Activated naive CD4-positive, alpha-beta T cell treated with anti-CD3 and anti-CD28 coated beads for 36 hours (primary cell): ENCODE measurements at regions of chrX and their contacts with region 1.

Region 1: GRCh38 chrX:46758906-46759644 is at the start of gene SLC9A7:
- DNase-seq: peak; percentile 82
- H3K4me3 Mint-ChIP-seq: peak within 1 kb of the TSS; percentile 91
- H3K27ac Mint-ChIP-seq: peak within 1 kb of the TSS; percentile 82
- H3K4me1 Mint-ChIP-seq: peaks cover 24% of the 10 kb centered on the region
- H3K27me3 Mint-ChIP-seq: peaks cover 4% of the 10 kb centered on the region
- total RNA-seq, gene SLC9A7: 10.1 to 11.1 TPM

Region 2: GRCh38 chrX:46796574-46797191 is 37.6 kb after region 1 on chrX:
- CTCF ChIA-PET with region 1: interaction called, 29 read pairs
- intact Hi-C with region 1: loop called (anchors 1 kb)
- DNase-seq: peak; percentile 86
- H3K4me3 Mint-ChIP-seq: no peak overlapping the region
- H3K27ac Mint-ChIP-seq: no peak overlapping the region
- H3K4me1 Mint-ChIP-seq: peaks cover 18% of the 10 kb centered on the region
- H3K27me3 Mint-ChIP-seq: no peaks in the 10 kb centered on the region

Region 3: DNA sequence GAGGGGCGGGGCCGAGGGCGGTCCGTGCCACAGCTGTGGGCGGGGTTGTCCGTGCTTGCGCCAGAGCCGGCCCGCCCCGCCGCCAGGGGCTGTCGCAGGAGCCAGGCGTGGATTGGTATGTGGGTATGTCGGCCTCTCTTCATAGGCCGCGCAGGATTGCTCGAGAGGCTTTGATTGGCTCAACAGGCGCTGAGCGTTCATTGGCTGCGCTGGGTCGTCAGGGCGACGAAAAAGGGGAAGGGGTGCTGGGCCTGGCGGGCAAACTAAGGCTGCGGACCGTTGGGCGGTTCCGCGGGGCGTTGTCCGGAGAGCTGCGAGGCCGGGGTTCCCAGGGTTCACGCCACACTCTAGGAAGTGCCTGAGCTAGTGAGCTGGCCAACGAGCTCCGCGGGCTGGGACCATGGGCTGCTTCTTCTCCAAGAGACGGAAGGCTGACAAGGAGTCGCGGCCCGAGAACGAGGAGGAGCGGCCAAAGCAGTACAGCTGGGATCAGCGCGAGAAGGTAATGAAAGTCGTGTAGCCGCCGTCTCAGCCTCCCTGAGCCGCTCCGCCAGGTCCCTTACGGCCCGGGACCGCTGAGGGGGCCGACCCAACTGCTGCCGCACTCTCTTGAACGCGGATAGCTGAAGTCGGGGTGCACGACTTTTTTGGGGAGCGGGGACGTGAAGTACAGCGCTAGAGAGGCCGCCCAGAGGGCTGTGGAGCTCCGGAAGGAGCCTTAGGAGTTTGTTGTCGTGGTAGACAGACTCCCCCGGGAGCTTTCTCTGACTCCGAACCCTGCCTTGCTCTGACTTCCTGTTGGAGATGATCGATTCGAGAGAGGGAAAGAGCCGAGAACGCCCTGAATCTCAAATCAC is 77.9 kb after region 1 on chrX and contains the start of gene RP2:
- CTCF ChIA-PET with region 1: no interaction called
- intact Hi-C with region 1: loop called (anchors 2 kb)
- DNase-seq: peak; percentile 89
- H3K4me3 Mint-ChIP-seq: peak within 1 kb of the TSS; percentile 91
- H3K27ac Mint-ChIP-seq: peak within 1 kb of the TSS; percentile 84
- H3K4me1 Mint-ChIP-seq: peaks cover 2% of the 10 kb centered on the region
- H3K27me3 Mint-ChIP-seq: no peaks in the 10 kb centered on the region
- total RNA-seq, gene RP2: 4.0 to 4.2 TPM

Region 4: DNA sequence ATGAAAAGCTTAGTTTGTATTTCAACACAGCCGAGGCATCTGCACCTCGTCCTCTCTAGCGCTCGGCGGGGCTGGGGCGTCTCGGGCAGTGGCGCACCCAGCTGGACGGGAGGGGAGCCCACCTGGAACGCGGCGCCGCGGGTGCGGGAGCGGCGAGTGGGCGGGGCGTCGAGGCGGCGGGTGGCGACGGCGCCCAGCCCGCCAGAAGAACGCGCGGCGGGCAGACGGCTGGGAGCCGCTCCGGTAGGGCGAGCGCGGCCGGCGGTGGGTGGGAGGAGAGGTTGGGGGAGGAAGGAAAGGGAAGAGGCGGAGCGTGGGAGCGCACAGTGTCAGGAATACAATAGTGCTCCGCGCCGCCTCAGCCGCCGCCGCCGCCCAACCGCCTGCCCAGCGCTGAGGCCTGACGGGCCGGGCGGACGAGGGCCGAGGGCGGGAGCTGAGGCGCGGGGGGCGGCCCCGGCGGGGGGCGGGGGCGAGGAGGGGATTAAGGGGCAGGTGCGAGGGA is 153.1 kb after region 1 on chrX and contains the start of gene JADE3:
- CTCF ChIA-PET with region 1: no interaction called
- intact Hi-C with region 1: loop called (anchors 5 kb)
- DNase-seq: peak; percentile 23
- H3K4me3 Mint-ChIP-seq: peak within 1 kb of the TSS; percentile 73
- H3K27ac Mint-ChIP-seq: no peak within 1 kb of the TSS
- H3K4me1 Mint-ChIP-seq: peaks cover 12% of the 10 kb centered on the region
- H3K27me3 Mint-ChIP-seq: peaks cover 32% of the 10 kb centered on the region
- total RNA-seq, gene JADE3: 1.4 TPM

Region 5: GRCh38 chrX:46978341-46979291 is 219.5 kb after region 1 on chrX:
- CTCF ChIA-PET with region 1: no interaction called
- intact Hi-C with region 1: loop called (anchors 2 kb)
- DNase-seq: peak; percentile 87
- H3K4me3 Mint-ChIP-seq: no peak overlapping the region
- H3K27ac Mint-ChIP-seq: no peak overlapping the region
- H3K4me1 Mint-ChIP-seq: no peaks in the 10 kb centered on the region
- H3K27me3 Mint-ChIP-seq: no peaks in the 10 kb centered on the region

Region 6: DNA sequence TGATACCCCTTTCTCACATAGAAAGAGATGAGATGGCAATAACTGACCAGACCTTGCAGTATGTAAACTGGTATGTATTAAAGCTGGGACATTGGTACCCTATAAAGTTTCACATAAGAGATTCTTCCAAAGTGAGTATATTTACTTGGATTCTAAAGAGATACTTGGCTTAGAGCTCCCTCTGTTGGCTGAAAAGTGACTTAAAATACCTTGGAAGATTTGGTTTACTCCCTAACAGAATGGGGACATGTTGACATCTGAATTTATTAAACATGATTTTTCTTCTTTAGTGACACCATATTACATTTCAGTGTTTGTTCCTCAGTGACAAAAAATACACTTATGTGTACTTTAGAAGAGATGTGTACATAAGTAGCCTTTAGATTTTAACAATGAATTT is 271.3 kb after region 1 on chrX:
- CTCF ChIA-PET with region 1: interaction called, 3 read pairs
- intact Hi-C with region 1: loop called (anchors 1 kb)
- DNase-seq: peak; percentile 17
- H3K4me3 Mint-ChIP-seq: no peak overlapping the region
- H3K27ac Mint-ChIP-seq: no peak overlapping the region
- H3K4me1 Mint-ChIP-seq: no peaks in the 10 kb centered on the region
- H3K27me3 Mint-ChIP-seq: no peaks in the 10 kb centered on the region

Region 7: GRCh38 chrX:47093248-47093647 is 334.2 kb after region 1 on chrX:
- CTCF ChIA-PET with region 1: no interaction called
- intact Hi-C with region 1: loop called (anchors 1 kb)
- DNase-seq: peak; percentile 21
- H3K4me3 Mint-ChIP-seq: no peak overlapping the region
- H3K27ac Mint-ChIP-seq: no peak overlapping the region
- H3K4me1 Mint-ChIP-seq: peaks cover 13% of the 10 kb centered on the region
- H3K27me3 Mint-ChIP-seq: no peaks in the 10 kb centered on the region